ENCODE measurements at regions of chr6 and their contacts with region 1.

Region 1: GRCh38 chr6:117482240-117483003 is at the start of gene DCBLD1:
- DNase-seq: peak; percentile 58 to 69
- ATAC-seq: peak; percentile 85 to 89
- H3K4me3 ChIP-seq: peak within 1 kb of the TSS; percentile 82
- H3K27ac ChIP-seq: peak within 1 kb of the TSS; percentile 94 to 99
- H3K4me1 ChIP-seq: peaks cover 32% of the 10 kb centered on the region; the same call in 2 of the 3 replicates
- CTCF ChIP-seq: no peak
- EP300 ChIP-seq: no peak
- POLR2A ChIP-seq: peak; percentile 75
- RAD21 ChIP-seq: 0 out of 5 replicates have a peak, but pooled peaks of 1 of the 2 experiments have one; percentile 15
- polyA plus RNA-seq, gene DCBLD1: 39.3 and 49.1 TPM in 2 replicates

Region 2: GRCh38 chr6:117469356-117469755 is 13.1 kb before region 1 on chr6:
- CTCF ChIA-PET with region 1: interaction called, 10 read pairs
- POLR2A ChIA-PET with region 1: no interaction called
- DNase-seq: no peak
- ATAC-seq: no peak
- H3K4me3 ChIP-seq: no peak overlapping the region
- H3K27ac ChIP-seq: no peak overlapping the region
- H3K4me1 ChIP-seq: peaks cover 16% of the 10 kb centered on the region
- CTCF ChIP-seq: no peak
- EP300 ChIP-seq: no peak
- POLR2A ChIP-seq: no peak
- RAD21 ChIP-seq: no peak

Region 3: DNA sequence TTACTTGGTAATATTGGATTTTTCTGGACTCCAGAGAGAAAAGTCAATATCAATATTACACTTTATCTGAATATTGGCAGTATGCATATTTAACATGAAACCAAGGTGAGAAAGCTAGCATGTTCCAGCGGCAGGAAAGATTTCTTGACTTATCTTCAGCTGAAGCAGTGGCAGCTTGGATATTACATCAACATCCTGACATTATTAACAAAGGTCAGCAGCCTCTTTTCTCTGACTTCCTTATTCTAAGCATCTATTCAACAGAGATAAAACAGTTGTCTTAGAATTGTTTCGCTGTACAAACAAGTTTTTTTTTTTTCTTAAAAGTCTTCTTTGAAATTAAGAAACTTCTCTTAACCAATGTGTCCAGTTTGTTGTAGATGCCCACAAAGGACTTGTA is 11.9 kb after region 1 on chr6:
- CTCF ChIA-PET with region 1: interaction called, 3 read pairs
- POLR2A ChIA-PET with region 1: interaction called, 10 read pairs
- DNase-seq: no peak
- ATAC-seq: 0 out of 6 replicates have a peak, but pooled peaks of 1 of the 2 experiments have one; percentile 18
- H3K4me3 ChIP-seq: peak overlapping the region; percentile 31
- H3K27ac ChIP-seq: peak overlapping the region; percentile 91 to 96
- H3K4me1 ChIP-seq: peaks cover 92% of the 10 kb centered on the region
- CTCF ChIP-seq: no peak
- EP300 ChIP-seq: no peak
- POLR2A ChIP-seq: no peak
- RAD21 ChIP-seq: no peak

Region 4: GRCh38 chr6:117783279-117783678 is 300.9 kb after region 1 on chr6:
- CTCF ChIA-PET with region 1: no interaction called
- POLR2A ChIA-PET with region 1: no interaction called
- DNase-seq: no peak
- ATAC-seq: no peak
- H3K4me3 ChIP-seq: no peak overlapping the region
- H3K27ac ChIP-seq: no peak overlapping the region
- H3K4me1 ChIP-seq: no peaks in the 10 kb centered on the region
- CTCF ChIP-seq: no peak
- EP300 ChIP-seq: no peak
- POLR2A ChIP-seq: no peak
- RAD21 ChIP-seq: no peak

Measured in A549 (cell line).